PC-9 (cell line): ENCODE measurements at regions of chr10 and their contacts with region 1.

Region 1: GRCh38 chr10:60414805-60415585 is 25.3 kb upstream of the ANK3 start:
- DNase-seq: peak; percentile 90 to 99
- H3K4me3 ChIP-seq: no peak overlapping the region; the same call in 1 of the 2 replicates
- H3K27ac ChIP-seq: peak overlapping the region; percentile 61
- H3K4me1 ChIP-seq: peaks cover 62% of the 10 kb centered on the region
- H3K27me3 ChIP-seq: no peaks in the 10 kb centered on the region
- CTCF ChIP-seq: no peak

Region 2: GRCh38 chr10:60271319-60272040 is 143.5 kb before region 1 on chr10:
- CTCF ChIA-PET with region 1: no interaction called
- POLR2A ChIA-PET with region 1: no interaction called
- intact Hi-C with region 1: no loop called
- DNase-seq: no peak
- H3K4me3 ChIP-seq: no peak overlapping the region
- H3K27ac ChIP-seq: no peak overlapping the region
- H3K4me1 ChIP-seq: no peaks in the 10 kb centered on the region
- H3K27me3 ChIP-seq: no peaks in the 10 kb centered on the region
- CTCF ChIP-seq: no peak

Region 3: DNA sequence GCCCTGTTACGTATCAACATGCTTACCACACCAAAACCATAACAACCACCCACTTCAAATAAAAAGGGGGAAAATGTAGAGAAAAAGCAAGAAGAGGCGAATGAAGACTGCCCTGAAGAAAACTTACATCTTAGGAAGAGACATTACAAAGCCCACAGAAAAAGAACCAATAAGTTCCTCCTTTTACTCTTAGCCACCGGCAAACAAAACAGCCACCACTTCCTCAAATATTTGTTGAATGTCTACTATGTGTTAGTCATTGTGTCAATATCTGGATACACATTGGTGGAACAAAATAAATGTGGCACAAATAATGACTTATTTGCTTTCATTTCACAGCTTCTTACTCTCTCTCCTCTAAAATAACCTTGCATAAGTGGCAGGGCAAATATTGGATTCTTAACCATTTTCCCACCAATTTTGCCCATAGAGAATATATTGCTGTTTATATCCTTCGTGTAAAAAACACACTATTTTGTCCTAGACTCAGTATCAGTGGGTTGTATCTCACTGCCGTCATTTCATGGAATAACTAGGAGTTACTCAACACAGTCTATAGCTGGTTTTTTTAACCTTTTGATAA is 132.1 kb before region 1 on chr10:
- CTCF ChIA-PET with region 1: no interaction called
- POLR2A ChIA-PET with region 1: no interaction called
- intact Hi-C with region 1: loop called (anchors 2 kb)
- DNase-seq: peak; percentile 32 to 96
- H3K4me3 ChIP-seq: no peak overlapping the region
- H3K27ac ChIP-seq: peak overlapping the region; percentile 52
- H3K4me1 ChIP-seq: peaks cover 24% of the 10 kb centered on the region
- H3K27me3 ChIP-seq: no peaks in the 10 kb centered on the region
- CTCF ChIP-seq: no peak